ENCODE measurements at regions of chr4 and their contacts with region 1.

Region 1: DNA sequence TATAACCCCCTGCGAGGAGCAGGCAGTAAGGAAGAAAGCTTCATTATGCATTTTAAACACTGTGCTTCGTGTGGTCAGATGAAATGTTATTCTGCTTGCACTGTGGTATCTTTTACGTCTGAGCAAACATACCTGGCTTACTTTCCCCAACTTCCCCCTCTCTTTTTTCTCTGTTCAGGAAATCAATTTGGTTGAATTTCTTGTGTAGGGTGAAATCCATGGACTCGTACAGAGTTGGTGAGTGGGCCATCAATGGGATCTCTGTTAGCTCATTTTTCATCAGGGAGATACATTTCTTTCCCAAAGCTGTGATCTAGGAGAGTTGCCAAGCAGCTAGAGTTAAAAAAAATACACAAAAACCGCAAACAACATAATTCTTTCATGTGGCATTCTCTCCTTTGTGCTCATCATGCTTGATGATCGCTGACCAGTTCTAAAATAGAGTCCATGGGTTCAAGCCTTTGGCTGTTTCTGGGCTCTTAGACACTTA is 98.5 kb downstream of the FRAS1 start:
- DNase-seq: no peak
- ATAC-seq: no peak
- H3K4me3 ChIP-seq: no peak overlapping the region
- H3K27ac ChIP-seq: no peak overlapping the region
- H3K4me1 ChIP-seq: no peaks in the 10 kb centered on the region
- H3K27me3 ChIP-seq: no peaks in the 10 kb centered on the region

Region 2: GRCh38 chr4:78056265-78057129 is 99.2 kb before region 1 on chr4:
- intact Hi-C with region 1: loop called in 1 of 4 experiments (anchors 10 kb)
- DNase-seq: peak; percentile 77 to 88 (median 87)
- ATAC-seq: peak; percentile 77 to 78
- H3K4me3 ChIP-seq: peak overlapping the region; percentile 73
- H3K27ac ChIP-seq: peak overlapping the region; percentile 56
- H3K4me1 ChIP-seq: no peaks in the 10 kb centered on the region
- H3K27me3 ChIP-seq: no peaks in the 10 kb centered on the region

Measured in right cardiac atrium (tissue), 5 donors.